Activated CD4-positive, alpha-beta T cell treated with anti-CD3 and anti-CD28 coated beads for 36 hours (primary cell): ENCODE measurements at regions of chr5 and their contacts with region 1.

Region 1: DNA sequence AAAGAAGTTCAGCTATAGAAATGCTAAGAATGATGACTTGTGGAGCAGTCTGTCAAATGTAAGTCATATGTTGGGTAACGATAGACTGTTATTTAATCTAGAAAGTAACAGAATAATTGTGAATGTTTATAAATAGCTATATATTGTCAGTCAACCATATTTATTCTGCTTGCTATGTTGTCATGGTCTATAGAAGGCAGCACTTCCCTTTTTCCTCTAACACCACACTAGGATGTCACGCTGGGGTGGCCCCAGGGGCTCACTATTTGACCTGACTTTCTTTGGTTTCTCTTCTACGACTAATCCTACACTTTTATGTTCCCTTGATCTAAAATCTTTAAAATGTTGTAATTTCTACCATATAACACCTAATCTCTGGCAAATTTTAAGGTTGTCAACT is 20.5 kb downstream of the ERAP2 start:
- DNase-seq: peak; percentile 59
- ATAC-seq: peak; percentile 57
- H3K4me3 Mint-ChIP-seq: peak overlapping the region; percentile 77
- H3K27ac Mint-ChIP-seq: peak overlapping the region; percentile 97
- H3K4me1 Mint-ChIP-seq: peaks cover 52% of the 10 kb centered on the region
- H3K27me3 Mint-ChIP-seq: no peaks in the 10 kb centered on the region

Region 2: DNA sequence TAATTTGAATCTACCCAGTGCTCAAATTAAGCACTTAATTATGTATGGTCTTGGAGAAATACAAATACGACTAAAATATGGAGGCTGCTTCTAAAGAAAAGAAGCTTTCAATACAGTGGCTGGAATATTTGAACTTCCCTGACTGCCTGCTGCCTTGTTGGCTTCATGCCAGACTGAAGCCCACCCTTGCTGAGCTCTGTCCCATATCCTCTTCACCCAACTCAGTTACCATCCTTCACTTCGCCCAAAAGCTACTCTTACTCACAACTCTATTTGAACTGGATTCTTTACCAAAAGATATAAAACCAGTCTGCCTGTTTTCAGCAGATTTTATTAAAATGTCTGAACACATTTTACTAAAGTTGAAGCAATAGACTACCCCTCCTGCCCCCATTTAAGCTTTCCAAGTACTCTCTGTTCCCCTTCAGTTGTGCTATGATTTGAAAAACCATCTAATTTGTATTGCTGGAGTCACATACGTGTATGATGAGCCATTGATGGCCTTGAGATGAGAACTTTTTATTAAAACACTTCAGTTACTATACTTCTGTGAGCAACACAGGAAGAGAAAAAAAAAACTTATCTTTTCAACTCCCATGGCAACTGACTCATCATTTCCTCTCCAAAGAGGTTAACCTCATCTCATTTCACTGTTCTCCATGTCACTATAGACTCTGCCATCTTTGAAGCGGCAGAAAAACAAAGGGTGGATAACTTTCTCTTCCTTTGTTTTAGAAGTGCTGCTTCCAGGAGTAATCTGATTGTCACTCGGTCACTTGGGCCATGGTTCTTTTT is 359.6 kb before region 1 on chr5:
- CTCF ChIA-PET with region 1: no interaction called
- POLR2A ChIA-PET with region 1: no interaction called
- intact Hi-C with region 1: loop called in 1 of 2 experiments (anchors 5 kb)
- DNase-seq: no peak
- ATAC-seq: peak; percentile 86
- H3K4me3 Mint-ChIP-seq: peak overlapping the region; percentile 1
- H3K27ac Mint-ChIP-seq: peak overlapping the region; percentile 82
- H3K4me1 Mint-ChIP-seq: peaks cover 32% of the 10 kb centered on the region
- H3K27me3 Mint-ChIP-seq: no peaks in the 10 kb centered on the region

Region 3: GRCh38 chr5:96876292-96876850 is 20.4 kb before region 1 on chr5 and contains the start of gene ERAP2:
- CTCF ChIA-PET with region 1: interaction called, 11 read pairs
- POLR2A ChIA-PET with region 1: interaction called, 6 read pairs
- intact Hi-C with region 1: loop called (anchors 1 kb)
- DNase-seq: peak; percentile 34
- ATAC-seq: peak; percentile 72
- H3K4me3 Mint-ChIP-seq: peak within 1 kb of the TSS; percentile 86
- H3K27ac Mint-ChIP-seq: peak within 1 kb of the TSS; percentile 94
- H3K4me1 Mint-ChIP-seq: peaks cover 70% of the 10 kb centered on the region
- H3K27me3 Mint-ChIP-seq: no peaks in the 10 kb centered on the region
- total RNA-seq, gene ERAP2: 57.3 to 60.7 TPM

Region 4: DNA sequence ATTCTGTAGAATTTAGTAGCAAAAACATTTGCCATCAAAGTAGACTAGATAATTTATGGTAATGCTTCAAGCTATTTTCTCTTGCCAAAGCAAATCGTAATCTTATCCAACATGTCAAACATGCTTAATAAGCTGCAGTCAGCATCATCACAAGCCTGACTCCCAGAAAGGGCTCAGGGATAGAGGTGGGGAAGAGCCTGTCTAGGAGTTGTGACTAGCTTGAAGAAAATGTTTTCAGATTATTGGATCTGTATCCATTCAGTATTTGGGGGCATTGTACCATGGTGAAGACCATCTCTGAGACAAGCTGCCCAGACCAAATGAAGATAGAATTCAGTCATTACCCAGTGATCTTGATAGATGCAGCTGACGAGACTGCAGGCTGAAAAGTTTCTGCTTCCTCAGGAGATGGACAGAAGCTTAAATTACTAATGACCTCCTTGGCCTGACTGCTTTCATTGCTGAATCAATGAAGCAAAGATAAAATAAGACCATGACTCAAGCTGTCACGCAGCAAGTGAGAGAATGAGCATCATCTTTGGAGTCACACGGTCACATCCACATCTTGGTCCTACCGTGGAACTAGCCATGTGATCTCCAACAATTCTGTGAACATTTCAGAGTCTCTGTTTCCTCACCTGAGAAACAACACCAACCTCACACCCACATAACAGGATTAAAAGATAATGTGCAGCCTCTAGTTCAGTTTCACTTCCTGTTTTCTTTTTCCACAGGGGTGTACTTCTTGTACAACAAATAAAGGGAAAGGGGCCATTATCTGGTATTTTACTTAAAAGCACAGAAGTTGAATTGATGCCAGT is 11.1 kb before region 1 on chr5:
- CTCF ChIA-PET with region 1: interaction called, 6 read pairs
- POLR2A ChIA-PET with region 1: interaction called, 5 read pairs
- intact Hi-C with region 1: loop called in 1 of 2 experiments (anchors 1 kb)
- DNase-seq: peak; percentile 49
- ATAC-seq: peak; percentile 85
- H3K4me3 Mint-ChIP-seq: peak overlapping the region; percentile 32
- H3K27ac Mint-ChIP-seq: peak overlapping the region; percentile 89
- H3K4me1 Mint-ChIP-seq: peaks cover 52% of the 10 kb centered on the region
- H3K27me3 Mint-ChIP-seq: no peaks in the 10 kb centered on the region

Region 5: GRCh38 chr5:96919754-96920197 is 23.0 kb after region 1 on chr5:
- CTCF ChIA-PET with region 1: no interaction called
- POLR2A ChIA-PET with region 1: no interaction called
- intact Hi-C with region 1: loop called in 1 of 2 experiments (anchors 1 kb)
- DNase-seq: peak; percentile 46
- ATAC-seq: peak; percentile 89
- H3K4me3 Mint-ChIP-seq: no peak overlapping the region
- H3K27ac Mint-ChIP-seq: peak overlapping the region; percentile 51
- H3K4me1 Mint-ChIP-seq: peaks cover 49% of the 10 kb centered on the region
- H3K27me3 Mint-ChIP-seq: no peaks in the 10 kb centered on the region

Region 6: DNA sequence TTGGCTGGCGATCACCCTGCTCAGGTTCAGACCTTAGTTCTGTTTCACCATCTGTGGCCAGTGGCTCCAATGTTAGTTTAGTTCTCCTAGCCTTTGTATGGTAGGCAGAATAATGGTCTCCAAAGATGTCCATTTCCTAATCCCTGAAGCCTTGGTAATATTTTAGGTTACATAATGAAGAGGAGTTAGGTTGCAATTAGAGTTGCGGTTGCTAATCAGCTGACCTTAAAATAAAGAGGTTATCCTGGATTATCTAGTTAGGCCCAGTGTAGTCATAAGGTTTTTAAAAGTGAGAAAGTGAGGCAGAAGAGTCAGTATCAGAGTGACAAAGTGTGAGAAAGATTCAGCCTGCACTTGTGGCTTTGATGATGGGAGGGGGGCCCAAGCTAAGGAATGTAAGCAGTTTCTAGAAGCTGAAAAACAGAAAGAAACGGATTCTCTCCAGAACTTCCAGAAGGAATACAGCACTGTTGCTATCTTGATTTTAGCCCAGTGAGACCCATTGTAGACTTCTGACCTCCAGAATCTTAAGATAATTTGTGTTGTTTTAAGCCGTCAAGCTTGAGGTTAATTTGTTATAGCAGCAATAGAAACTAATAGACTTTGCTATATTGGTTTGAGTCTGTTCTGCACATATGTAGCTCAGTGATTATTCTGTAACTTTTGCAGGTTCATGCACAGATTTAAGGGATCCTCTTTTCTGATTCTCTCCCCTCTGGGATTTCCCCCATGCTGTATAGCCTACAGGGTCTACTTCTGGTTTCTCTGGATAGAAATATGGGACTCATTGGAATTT is 60.6 kb after region 1 on chr5:
- CTCF ChIA-PET with region 1: no interaction called
- POLR2A ChIA-PET with region 1: interaction called, 3 read pairs
- intact Hi-C with region 1: loop called in 1 of 2 experiments (anchors 1 kb)
- DNase-seq: peak; percentile 73
- ATAC-seq: peak; percentile 93
- H3K4me3 Mint-ChIP-seq: peak overlapping the region; percentile 51
- H3K27ac Mint-ChIP-seq: peak overlapping the region; percentile 84
- H3K4me1 Mint-ChIP-seq: peaks cover 74% of the 10 kb centered on the region
- H3K27me3 Mint-ChIP-seq: no peaks in the 10 kb centered on the region

Region 7: GRCh38 chr5:97118261-97119006 is 221.6 kb after region 1 on chr5:
- CTCF ChIA-PET with region 1: no interaction called
- POLR2A ChIA-PET with region 1: no interaction called
- intact Hi-C with region 1: no loop called
- DNase-seq: no peak
- ATAC-seq: no peak
- H3K4me3 Mint-ChIP-seq: no peak overlapping the region
- H3K27ac Mint-ChIP-seq: no peak overlapping the region
- H3K4me1 Mint-ChIP-seq: no peaks in the 10 kb centered on the region
- H3K27me3 Mint-ChIP-seq: peaks cover 6% of the 10 kb centered on the region